ENCODE measurements at regions of chr1 and their contacts with region 1.

Region 1: GRCh38 chr1:151909150-151910149 is at the start of gene THEM4:
- DNase-seq: peak; percentile 97
- ATAC-seq: peak; percentile 95
- H3K4me3 Mint-ChIP-seq: peak within 1 kb of the TSS; percentile 86
- H3K27ac Mint-ChIP-seq: peak within 1 kb of the TSS; percentile 85
- H3K4me1 Mint-ChIP-seq: peaks cover 36% of the 10 kb centered on the region
- H3K27me3 Mint-ChIP-seq: no peaks in the 10 kb centered on the region
- total RNA-seq, gene THEM4: 19.1 to 20.9 TPM

Region 2: DNA sequence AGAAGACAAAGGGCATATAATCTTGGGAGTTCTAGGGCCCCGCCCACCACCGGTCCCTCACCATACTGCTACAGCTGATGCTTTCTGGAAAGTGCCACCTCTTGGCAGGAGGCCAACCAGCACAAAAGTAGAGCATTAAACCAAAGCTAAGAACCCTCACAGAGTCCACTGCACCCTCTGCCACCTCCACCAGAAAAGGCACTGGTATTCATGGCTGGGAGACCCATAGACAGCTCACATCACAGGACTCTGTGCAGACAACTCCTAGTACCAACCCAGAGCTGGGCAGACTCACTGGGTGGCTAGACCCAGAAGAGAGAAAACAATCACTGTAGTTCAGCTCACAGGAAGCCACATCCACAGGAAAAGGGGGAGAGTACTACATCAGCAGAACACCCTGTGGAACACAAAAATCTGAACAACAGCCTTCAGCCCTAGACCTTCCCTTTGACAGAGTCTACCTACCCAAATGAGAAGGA is 10.9 kb before region 1 on chr1:
- CTCF ChIA-PET with region 1: interaction called, 16 read pairs
- DNase-seq: peak; percentile 74
- ATAC-seq: peak; percentile 83
- H3K4me3 Mint-ChIP-seq: peak overlapping the region; percentile 45
- H3K27ac Mint-ChIP-seq: peak overlapping the region; percentile 75
- H3K4me1 Mint-ChIP-seq: peaks cover 40% of the 10 kb centered on the region
- H3K27me3 Mint-ChIP-seq: no peaks in the 10 kb centered on the region

Measured in activated CD8-positive, alpha-beta memory T cell treated with anti-CD3 and anti-CD28 coated beads, Interleukin-2, amount 10 ng/mL, durations not matched to agents 7 days and 5 days (primary cell).